PC-3 (cell line): ENCODE measurements at regions of chr1 and their contacts with region 1.

Region 1: DNA sequence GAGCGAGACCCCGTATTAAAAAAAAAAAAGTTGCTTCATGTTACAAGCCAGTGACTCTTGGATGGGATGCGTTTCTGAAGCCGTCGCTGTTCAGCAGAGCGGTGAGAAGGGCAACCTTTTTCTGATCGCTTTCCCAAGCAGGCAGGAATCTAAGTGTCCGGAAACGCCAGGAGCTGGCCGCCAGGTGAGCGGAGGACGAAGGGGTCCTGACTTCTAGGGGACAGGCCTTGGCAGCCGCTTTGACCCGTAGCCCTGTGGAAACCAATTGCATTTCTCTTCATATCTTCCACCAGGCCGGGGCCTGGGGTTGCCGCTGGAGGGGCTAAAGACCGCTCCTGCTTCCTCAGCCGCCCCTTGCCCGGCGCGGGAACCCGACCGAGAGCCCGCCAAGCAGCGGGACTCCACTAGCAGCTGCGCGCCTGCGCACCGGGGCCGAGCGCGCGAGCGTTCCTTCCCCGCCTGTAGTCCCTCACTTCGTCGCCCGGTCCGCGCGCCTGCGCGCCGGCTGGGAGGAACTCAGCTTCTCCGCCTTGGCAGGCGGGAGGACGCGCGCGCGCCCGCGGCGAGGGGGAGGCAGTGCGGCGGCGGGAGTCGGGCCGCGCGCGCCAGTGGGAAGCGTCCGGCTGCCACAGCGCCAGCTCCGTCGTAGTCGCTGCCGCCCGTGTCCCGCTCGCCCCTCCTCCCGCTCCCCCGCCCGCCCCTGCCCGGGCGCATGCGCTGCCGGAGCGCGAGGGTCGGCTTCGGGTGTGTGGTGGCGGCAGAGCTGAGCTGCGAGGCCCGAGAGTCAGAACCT is at the start of gene SPEN:
- DNase-seq: peak; percentile 98
- ATAC-seq: peak; percentile 77
- H3K4me3 ChIP-seq: peak within 1 kb of the TSS; percentile 90
- H3K27ac ChIP-seq: peak within 1 kb of the TSS; percentile 95
- H3K4me1 ChIP-seq: peaks cover 42% of the 10 kb centered on the region
- H3K27me3 ChIP-seq: no peaks in the 10 kb centered on the region
- CTCF ChIP-seq: no peak
- total RNA-seq, gene SPEN: 26.7 and 35.7 TPM in 2 replicates

Region 2: GRCh38 chr1:15728897-15729755 is 118.2 kb before region 1 on chr1:
- CTCF ChIA-PET with region 1: no interaction called
- POLR2A ChIA-PET with region 1: no interaction called
- intact Hi-C with region 1: no loop called
- DNase-seq: no peak
- ATAC-seq: no peak
- H3K4me3 ChIP-seq: no peak overlapping the region
- H3K27ac ChIP-seq: no peak overlapping the region
- H3K4me1 ChIP-seq: no peaks in the 10 kb centered on the region
- H3K27me3 ChIP-seq: no peaks in the 10 kb centered on the region
- CTCF ChIP-seq: no peak

Region 3: DNA sequence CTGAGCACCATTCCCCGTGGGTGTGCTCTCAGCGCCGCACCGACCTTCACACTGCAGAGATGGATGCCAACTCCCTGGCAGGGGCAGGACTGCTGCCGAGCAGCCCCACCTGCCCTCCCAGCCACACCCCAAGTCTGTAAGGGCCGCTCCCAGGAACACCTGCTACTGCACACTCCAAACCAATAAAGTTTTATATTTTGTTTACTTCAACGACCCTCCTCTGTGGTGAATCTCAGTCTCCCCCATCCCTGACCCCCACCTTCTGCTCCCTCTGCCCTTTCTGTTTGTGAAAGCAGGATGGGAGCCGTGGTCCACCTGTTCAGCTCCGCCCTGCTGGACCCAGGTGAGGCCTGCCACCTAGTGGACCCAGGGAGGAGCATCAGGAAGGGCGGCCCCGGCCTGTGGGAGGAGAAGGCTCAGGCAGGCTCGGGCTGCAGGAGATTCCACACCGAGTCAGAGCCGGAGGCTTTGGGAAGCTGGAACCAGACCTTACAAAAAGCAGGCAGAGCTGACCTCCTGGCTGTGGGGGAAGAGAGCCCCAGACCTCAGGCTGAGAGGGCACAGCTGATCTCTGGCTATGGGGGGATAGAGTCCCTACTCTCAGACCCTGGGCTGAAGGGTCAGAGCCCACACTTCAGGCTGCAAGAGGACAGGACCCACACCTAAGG is 106.0 kb before region 1 on chr1:
- CTCF ChIA-PET with region 1: interaction called, 10 read pairs
- POLR2A ChIA-PET with region 1: no interaction called
- intact Hi-C with region 1: no loop called
- DNase-seq: peak; percentile 89
- ATAC-seq: peak; percentile 97
- H3K4me3 ChIP-seq: no peak overlapping the region
- H3K27ac ChIP-seq: no peak overlapping the region
- H3K4me1 ChIP-seq: no peaks in the 10 kb centered on the region; the same call in 1 of the 2 replicates
- H3K27me3 ChIP-seq: no peaks in the 10 kb centered on the region
- CTCF ChIP-seq: peak; percentile 94

Region 4: DNA sequence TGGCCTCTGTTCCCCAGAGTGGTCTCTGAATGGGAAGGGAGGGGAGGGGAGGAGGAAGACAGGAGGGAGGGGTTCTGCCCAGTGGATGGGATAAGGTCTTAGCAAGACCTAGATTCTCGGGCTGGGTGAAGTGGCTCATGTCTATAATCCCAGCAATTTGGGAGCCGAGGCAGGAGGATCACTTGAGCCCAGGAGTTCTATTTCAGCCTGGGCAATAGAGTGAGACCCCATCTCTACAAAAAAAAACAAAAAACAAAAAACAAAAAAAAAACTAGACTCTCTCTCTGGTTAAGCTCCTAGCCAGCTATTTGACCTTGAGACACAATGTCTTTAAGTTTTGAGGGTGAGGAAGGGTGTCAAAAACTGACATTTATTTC is 51.2 kb before region 1 on chr1:
- CTCF ChIA-PET with region 1: interaction called, 3 read pairs
- POLR2A ChIA-PET with region 1: interaction called, 11 read pairs
- intact Hi-C with region 1: no loop called
- DNase-seq: no peak
- ATAC-seq: no peak
- H3K4me3 ChIP-seq: no peak overlapping the region
- H3K27ac ChIP-seq: peak overlapping the region; percentile 94
- H3K4me1 ChIP-seq: peaks cover 60% of the 10 kb centered on the region
- H3K27me3 ChIP-seq: no peaks in the 10 kb centered on the region
- CTCF ChIP-seq: no peak

Region 5: GRCh38 chr1:15835741-15836510 is 11.4 kb before region 1 on chr1:
- CTCF ChIA-PET with region 1: interaction called, 4 read pairs
- POLR2A ChIA-PET with region 1: interaction called, 10 read pairs
- intact Hi-C with region 1: loop called (anchors 1 kb)
- DNase-seq: peak; percentile 99
- ATAC-seq: peak; percentile 58
- H3K4me3 ChIP-seq: peak overlapping the region; percentile 74
- H3K27ac ChIP-seq: peak overlapping the region; percentile 100
- H3K4me1 ChIP-seq: peaks cover 19% of the 10 kb centered on the region
- H3K27me3 ChIP-seq: no peaks in the 10 kb centered on the region
- CTCF ChIP-seq: no peak

Region 6: GRCh38 chr1:15885701-15886610 is 38.7 kb after region 1 on chr1:
- CTCF ChIA-PET with region 1: no interaction called
- POLR2A ChIA-PET with region 1: interaction called, 4 read pairs
- intact Hi-C with region 1: loop called (anchors 5 kb)
- DNase-seq: peak; percentile 81
- ATAC-seq: peak; percentile 97
- H3K4me3 ChIP-seq: peak overlapping the region; percentile 55
- H3K27ac ChIP-seq: peak overlapping the region; percentile 73
- H3K4me1 ChIP-seq: peaks cover 20% of the 10 kb centered on the region
- H3K27me3 ChIP-seq: no peaks in the 10 kb centered on the region
- CTCF ChIP-seq: peak; percentile 41; the same call in 1 of the 2 replicates

Region 7: DNA sequence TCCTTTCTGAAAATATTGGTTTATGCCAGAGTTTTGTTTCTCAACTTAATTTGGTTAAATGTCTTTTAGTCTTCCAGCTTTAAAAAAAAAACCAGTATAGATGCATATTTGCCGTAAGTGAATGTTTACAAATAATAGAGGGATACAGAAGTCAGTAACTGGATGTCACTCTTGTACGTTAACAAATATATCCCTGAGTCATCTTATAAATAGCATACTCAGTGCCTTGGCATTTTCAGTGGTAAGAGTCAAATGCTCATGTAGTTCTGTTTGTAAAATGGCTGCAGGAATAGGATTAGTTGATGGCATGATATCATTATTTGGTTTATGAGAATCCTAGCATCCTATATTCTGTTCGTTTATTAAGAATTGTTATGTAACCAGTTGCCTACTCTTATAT is 55.6 kb after region 1 on chr1:
- CTCF ChIA-PET with region 1: interaction called, 11 read pairs
- POLR2A ChIA-PET with region 1: no interaction called
- intact Hi-C with region 1: loop called (anchors 5 kb)
- DNase-seq: peak; percentile 89
- ATAC-seq: peak; percentile 96
- H3K4me3 ChIP-seq: no peak overlapping the region; the same call in 1 of the 2 replicates
- H3K27ac ChIP-seq: peak overlapping the region; percentile 41
- H3K4me1 ChIP-seq: peaks cover 22% of the 10 kb centered on the region
- H3K27me3 ChIP-seq: no peaks in the 10 kb centered on the region
- CTCF ChIP-seq: no peak

Region 8: DNA sequence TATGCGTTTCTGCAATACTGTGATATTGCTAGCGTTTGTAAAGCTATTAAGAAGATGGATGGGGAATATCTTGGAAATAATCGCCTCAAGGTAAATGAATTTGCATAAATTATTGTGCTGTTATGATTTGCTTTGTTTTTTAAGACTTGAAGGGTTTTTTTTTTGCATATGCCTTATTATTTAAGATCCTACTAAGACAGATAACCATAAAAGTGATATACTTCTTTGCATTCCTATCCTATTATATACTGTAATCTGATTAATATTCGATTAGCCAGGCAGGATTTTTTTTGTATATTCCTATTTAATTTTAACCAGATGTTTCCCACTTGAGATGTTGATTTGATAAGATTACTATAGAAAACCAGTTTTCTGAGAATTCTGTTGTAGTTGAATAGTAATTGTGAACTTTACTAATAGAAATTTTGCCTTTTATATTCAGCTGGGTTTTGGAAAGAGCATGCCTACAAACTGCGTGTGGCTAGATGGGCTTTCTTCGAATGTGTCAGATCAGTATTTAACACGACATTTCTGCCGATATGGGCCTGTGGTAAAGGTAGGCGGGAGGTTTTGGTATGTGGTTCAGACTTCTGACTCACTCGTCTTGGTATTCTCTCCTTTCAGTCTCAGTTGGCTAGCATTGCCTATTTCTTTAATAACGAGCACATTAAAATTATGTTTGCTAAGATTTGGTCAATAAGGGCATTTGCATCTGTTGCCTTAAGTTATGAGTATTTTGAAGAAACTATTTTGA is 71.8 kb after region 1 on chr1:
- CTCF ChIA-PET with region 1: no interaction called
- POLR2A ChIA-PET with region 1: interaction called, 5 read pairs
- intact Hi-C with region 1: loop called (anchors 5 kb)
- DNase-seq: peak; percentile 85
- ATAC-seq: peak; percentile 92
- H3K4me3 ChIP-seq: no peak overlapping the region
- H3K27ac ChIP-seq: peak overlapping the region; percentile 5
- H3K4me1 ChIP-seq: peaks cover 52% of the 10 kb centered on the region
- H3K27me3 ChIP-seq: no peaks in the 10 kb centered on the region
- CTCF ChIP-seq: no peak